Transverse colon (tissue), 4 donors: ENCODE measurements at regions of chr10 and their contacts with region 1.

Region 1: GRCh38 chr10:67722113-67722512 is 26.1 kb upstream of the CTNNA3 start:
- DNase-seq: no peak
- H3K4me3 ChIP-seq: no peak overlapping the region
- H3K27ac ChIP-seq: no peak overlapping the region
- H3K4me1 ChIP-seq: no peaks in the 10 kb centered on the region
- H3K27me3 ChIP-seq: no peaks in the 10 kb centered on the region
- CTCF ChIP-seq: no peak
- EP300 ChIP-seq: no peak
- POLR2A ChIP-seq: no peak

Region 2: GRCh38 chr10:66472156-66472555 is 1250.0 kb before region 1 on chr10:
- in situ Hi-C with region 1: no loop called
- intact Hi-C with region 1: loop called (anchors 5 kb)
- DNase-seq: no peak
- H3K4me3 ChIP-seq: no peak overlapping the region
- H3K27ac ChIP-seq: no peak overlapping the region
- H3K4me1 ChIP-seq: no peaks in the 10 kb centered on the region
- H3K27me3 ChIP-seq: no peaks in the 10 kb centered on the region
- CTCF ChIP-seq: no peak
- EP300 ChIP-seq: no peak
- POLR2A ChIP-seq: no peak

Region 3: DNA sequence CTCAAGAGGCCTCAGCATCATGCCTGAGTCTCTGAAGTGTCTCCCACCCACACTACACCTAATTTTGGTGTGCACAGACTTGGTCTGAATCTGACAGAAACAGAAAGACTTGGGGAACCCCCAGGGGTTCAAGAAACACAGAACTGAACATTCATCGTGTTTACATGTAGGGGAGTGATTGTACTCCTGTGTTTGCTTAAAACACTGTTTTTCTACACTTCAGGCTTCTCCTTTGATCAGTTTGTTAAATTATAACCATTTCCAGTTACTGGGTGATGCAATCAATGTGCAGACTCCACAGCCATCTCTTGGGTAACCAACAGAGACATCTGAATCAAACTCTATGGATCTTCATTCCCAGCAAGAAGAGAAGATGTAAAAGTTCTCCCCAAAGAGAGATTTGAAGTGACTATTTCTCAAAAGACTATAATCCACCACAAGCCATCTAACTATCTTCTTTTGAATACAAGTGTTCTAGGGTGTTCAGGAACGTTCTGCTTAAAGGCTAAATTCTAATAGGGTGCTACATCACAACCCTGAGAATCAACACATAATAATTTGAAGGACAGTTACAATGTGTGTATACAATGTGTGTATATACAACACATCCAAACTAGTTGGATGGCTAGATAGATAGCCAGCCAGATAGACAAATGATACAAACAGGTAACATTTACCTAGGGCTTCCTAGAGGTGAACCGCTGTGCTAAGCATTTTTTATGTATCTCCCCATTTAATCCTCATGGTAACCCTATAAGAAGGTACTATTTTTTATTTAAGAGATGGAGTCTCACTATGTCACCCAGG is 81.7 kb after region 1 on chr10:
- in situ Hi-C with region 1: no loop called
- intact Hi-C with region 1: no loop called
- DNase-seq: no peak
- H3K4me3 ChIP-seq: no peak overlapping the region
- H3K27ac ChIP-seq: no peak overlapping the region
- H3K4me1 ChIP-seq: peaks cover 0 to 3% (median 2%) of the 10 kb centered on the region in 4 donors
- H3K27me3 ChIP-seq: no peaks in the 10 kb centered on the region
- CTCF ChIP-seq: no peak
- EP300 ChIP-seq: no peak
- POLR2A ChIP-seq: no peak

Region 4: GRCh38 chr10:67884313-67884841 is 162.3 kb after region 1 on chr10 and contains the start of gene SIRT1:
- in situ Hi-C with region 1: no loop called
- intact Hi-C with region 1: no loop called
- DNase-seq: peak; percentile 98
- H3K4me3 ChIP-seq: peak within 1 kb of the TSS; percentile 63 to 84 (median 78)
- H3K27ac ChIP-seq: peak within 1 kb of the TSS; percentile 94 to 98 (median 96)
- H3K4me1 ChIP-seq: peaks cover 0 to 38% (median 11%) of the 10 kb centered on the region in 4 donors
- H3K27me3 ChIP-seq: no peaks in the 10 kb centered on the region
- CTCF ChIP-seq: no peak
- EP300 ChIP-seq: no peak
- POLR2A ChIP-seq: peak; percentile 93
- total RNA-seq, gene SIRT1: 12.5 to 23.8 (median 20.7) TPM

Region 5: GRCh38 chr10:67925449-67926005 is 203.4 kb after region 1 on chr10:
- in situ Hi-C with region 1: no loop called
- intact Hi-C with region 1: no loop called
- DNase-seq: no peak
- H3K4me3 ChIP-seq: no peak overlapping the region
- H3K27ac ChIP-seq: no peak overlapping the region
- H3K4me1 ChIP-seq: no peaks in the 10 kb centered on the region
- H3K27me3 ChIP-seq: no peaks in the 10 kb centered on the region
- CTCF ChIP-seq: no peak
- EP300 ChIP-seq: no peak
- POLR2A ChIP-seq: no peak